Sigmoid colon (tissue), 7 donors: ENCODE measurements at regions of chr4 and their contacts with region 1.

Region 1: GRCh38 chr4:57110640-57111511 is 691 bp upstream of the IGFBP7 start:
- DNase-seq: peak; percentile 82
- H3K4me3 ChIP-seq: peak overlapping the region; percentile 67 to 94 (median 76)
- H3K27ac ChIP-seq: peak overlapping the region; percentile 95 to 98 (median 97)
- H3K4me1 ChIP-seq: peaks cover 0 to 47% (median 33%) of the 10 kb centered on the region in 4 donors
- H3K27me3 ChIP-seq: no peaks in the 10 kb centered on the region
- CTCF ChIP-seq: no peak
- EP300 ChIP-seq: no peak
- POLR2A ChIP-seq: peak; percentile 34 to 60

Region 2: DNA sequence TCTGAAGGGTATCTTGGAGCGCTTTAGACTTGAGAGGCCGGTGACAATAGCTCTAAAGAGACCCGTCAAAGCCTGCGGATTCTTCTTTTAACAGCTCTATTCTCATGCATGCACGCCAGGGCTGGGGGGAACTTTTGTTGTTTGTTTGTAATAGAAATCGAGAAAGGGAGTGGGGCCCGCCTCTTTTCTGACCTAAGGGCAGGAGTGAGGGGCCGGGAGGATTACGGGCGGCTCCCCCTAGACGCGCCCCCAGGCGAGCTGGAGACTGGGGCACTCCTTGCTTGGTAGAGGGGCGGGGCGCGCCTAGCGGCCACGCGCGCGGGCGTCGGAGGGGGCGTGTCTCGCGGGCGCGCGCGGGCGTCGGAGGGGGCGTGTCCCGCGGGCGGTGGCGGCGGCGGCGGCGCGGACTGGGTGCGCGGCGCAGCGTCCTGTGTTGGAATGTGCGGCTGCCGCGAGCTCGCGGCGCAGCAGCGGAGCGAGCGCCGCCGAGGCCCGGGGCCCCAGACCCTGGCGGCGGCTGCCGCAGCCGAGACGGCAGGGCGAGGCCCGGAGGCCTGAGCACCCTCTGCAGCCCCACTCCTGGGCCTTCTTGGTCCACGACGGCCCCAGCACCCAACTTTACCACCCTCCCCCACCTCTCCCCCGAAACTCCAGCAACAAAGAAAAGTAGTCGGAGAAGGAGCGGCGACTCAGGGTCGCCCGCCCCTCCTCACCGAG is 203.2 kb before region 1 on chr4 and contains the start of gene REST:
- intact Hi-C with region 1: loop called (anchors 10 kb)
- DNase-seq: peak; percentile 87
- H3K4me3 ChIP-seq: peak within 1 kb of the TSS; percentile 75 to 98 (median 94)
- H3K27ac ChIP-seq: peak within 1 kb of the TSS; percentile 89 to 97 (median 95)
- H3K4me1 ChIP-seq: peaks cover 0 to 30% (median 27%) of the 10 kb centered on the region in 4 donors
- H3K27me3 ChIP-seq: no peaks in the 10 kb centered on the region
- CTCF ChIP-seq: no peak
- EP300 ChIP-seq: no peak
- POLR2A ChIP-seq: no peak
- total RNA-seq, gene REST: 23.7 to 32.8 (median 26.3) TPM

Region 3: DNA sequence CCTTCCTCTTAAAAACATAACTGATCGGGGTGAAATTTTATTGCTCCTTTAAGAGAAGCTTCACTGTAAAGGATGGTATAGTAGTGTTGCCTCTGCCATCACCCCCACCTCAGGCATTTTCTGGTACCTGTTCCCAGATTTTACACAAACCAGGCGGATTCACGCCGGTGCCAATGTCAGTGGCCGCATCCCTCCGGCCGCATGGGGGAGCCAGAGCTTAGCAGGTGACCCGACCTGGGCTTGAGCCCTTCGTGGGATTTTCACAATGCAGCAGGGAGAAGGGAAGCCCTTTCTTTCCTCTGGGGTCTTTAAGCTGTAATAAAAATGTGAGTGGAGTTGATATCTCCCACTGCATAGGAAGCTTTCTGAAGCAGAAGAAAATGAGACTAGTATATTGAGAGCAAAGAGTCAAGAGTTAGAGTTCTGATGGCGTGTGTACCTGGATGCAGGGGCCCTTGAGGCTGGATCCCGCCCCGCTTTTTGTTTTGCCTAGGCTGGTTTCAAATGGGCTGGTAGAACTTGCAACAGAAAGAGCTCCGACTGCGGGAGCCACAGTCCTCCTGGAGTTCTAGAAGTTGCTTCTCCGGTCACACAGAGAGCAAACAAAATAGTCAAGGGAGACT is 72.8 kb before region 1 on chr4:
- intact Hi-C with region 1: loop called (anchors 1 kb)
- DNase-seq: peak; percentile 82
- H3K4me3 ChIP-seq: no peak overlapping the region
- H3K27ac ChIP-seq: peak overlapping the region in 3 of 4 donors; percentile 32 to 56 (median 43)
- H3K4me1 ChIP-seq: peaks cover 0 to 37% (median 15%) of the 10 kb centered on the region in 4 donors
- H3K27me3 ChIP-seq: no peaks in the 10 kb centered on the region
- CTCF ChIP-seq: peak; percentile 71 to 86 (median 80)
- EP300 ChIP-seq: no peak
- POLR2A ChIP-seq: no peak

Region 4: GRCh38 chr4:57055886-57056285 is 55.0 kb before region 1 on chr4:
- intact Hi-C with region 1: loop called (anchors 2 kb)
- DNase-seq: peak; percentile 86
- H3K4me3 ChIP-seq: peak overlapping the region in 2 of 4 donors; percentile 21 to 25
- H3K27ac ChIP-seq: peak overlapping the region in 3 of 4 donors; percentile 68 to 86 (median 75)
- H3K4me1 ChIP-seq: peaks cover 0 to 63% (median 56%) of the 10 kb centered on the region in 4 donors
- H3K27me3 ChIP-seq: no peaks in the 10 kb centered on the region
- CTCF ChIP-seq: no peak
- EP300 ChIP-seq: peak in 3 of 4 donors; percentile 8 to 53 (median 47)
- POLR2A ChIP-seq: no peak

Region 5: GRCh38 chr4:57091657-57092162 is 19.2 kb before region 1 on chr4:
- intact Hi-C with region 1: no loop called
- DNase-seq: no peak
- H3K4me3 ChIP-seq: no peak overlapping the region
- H3K27ac ChIP-seq: peak overlapping the region; percentile 0 to 98 (median 74)
- H3K4me1 ChIP-seq: peaks cover 0 to 74% (median 62%) of the 10 kb centered on the region in 4 donors
- H3K27me3 ChIP-seq: no peaks in the 10 kb centered on the region
- CTCF ChIP-seq: no peak
- EP300 ChIP-seq: no peak
- POLR2A ChIP-seq: no peak

Region 6: DNA sequence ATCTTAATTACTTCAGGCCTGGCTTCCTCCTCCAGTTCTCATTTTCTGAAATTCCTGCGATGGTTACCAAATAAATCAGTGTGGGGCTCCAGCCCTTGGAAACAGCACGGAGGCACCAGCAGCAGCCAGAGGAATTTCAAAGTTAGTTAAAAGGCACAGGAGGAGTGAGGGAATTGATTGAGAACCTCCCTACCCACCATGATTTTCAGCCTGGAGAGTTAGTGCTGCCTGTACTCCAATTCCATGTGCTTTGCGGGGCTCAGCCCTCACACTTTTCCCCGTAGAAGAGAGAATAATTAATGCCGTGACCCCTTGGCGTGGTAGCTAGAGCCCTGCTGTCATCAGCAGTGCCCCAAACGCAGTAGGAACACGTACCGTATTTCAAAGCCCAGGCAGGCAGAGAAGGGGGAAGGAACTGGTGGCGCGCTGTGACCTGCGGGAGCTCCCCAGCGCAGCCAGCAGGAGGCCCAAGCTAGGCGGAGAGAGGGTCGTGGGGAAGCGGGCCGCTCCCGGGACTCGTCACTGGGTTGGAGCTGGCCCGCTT is 83.3 kb after region 1 on chr4:
- intact Hi-C with region 1: no loop called
- DNase-seq: no peak
- H3K4me3 ChIP-seq: peak overlapping the region in 1 of 4 donors; percentile 0
- H3K27ac ChIP-seq: peak overlapping the region in 3 of 4 donors; percentile 34 to 56 (median 45)
- H3K4me1 ChIP-seq: peaks cover 0 to 49% (median 36%) of the 10 kb centered on the region in 4 donors
- H3K27me3 ChIP-seq: no peaks in the 10 kb centered on the region
- CTCF ChIP-seq: no peak
- EP300 ChIP-seq: no peak
- POLR2A ChIP-seq: no peak

Region 7: DNA sequence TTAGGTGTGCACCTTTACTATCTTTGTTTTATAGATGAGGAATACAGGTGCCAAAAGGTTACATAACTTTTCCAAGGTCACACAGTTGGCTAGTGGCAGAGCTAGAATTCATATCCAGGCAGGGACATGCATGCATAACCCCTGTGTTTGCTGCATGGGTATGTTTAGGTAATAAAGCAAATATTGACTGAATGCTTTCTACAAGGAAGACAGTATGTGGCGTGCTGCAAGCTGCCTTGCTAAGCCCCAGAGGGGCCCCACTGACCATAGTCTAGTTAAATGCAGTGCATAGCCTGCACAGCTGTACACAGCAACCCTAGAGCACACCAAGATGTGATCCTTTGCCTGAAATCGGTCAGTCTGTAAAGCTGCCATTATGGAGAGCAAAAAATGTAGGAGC is 319.9 kb after region 1 on chr4:
- intact Hi-C with region 1: no loop called
- DNase-seq: no peak
- H3K4me3 ChIP-seq: no peak overlapping the region
- H3K27ac ChIP-seq: no peak overlapping the region
- H3K4me1 ChIP-seq: no peaks in the 10 kb centered on the region
- H3K27me3 ChIP-seq: no peaks in the 10 kb centered on the region
- CTCF ChIP-seq: no peak
- EP300 ChIP-seq: no peak
- POLR2A ChIP-seq: no peak